Calu3 (cell line): ENCODE measurements at regions of chr9 and their contacts with region 1.

Region 1: DNA sequence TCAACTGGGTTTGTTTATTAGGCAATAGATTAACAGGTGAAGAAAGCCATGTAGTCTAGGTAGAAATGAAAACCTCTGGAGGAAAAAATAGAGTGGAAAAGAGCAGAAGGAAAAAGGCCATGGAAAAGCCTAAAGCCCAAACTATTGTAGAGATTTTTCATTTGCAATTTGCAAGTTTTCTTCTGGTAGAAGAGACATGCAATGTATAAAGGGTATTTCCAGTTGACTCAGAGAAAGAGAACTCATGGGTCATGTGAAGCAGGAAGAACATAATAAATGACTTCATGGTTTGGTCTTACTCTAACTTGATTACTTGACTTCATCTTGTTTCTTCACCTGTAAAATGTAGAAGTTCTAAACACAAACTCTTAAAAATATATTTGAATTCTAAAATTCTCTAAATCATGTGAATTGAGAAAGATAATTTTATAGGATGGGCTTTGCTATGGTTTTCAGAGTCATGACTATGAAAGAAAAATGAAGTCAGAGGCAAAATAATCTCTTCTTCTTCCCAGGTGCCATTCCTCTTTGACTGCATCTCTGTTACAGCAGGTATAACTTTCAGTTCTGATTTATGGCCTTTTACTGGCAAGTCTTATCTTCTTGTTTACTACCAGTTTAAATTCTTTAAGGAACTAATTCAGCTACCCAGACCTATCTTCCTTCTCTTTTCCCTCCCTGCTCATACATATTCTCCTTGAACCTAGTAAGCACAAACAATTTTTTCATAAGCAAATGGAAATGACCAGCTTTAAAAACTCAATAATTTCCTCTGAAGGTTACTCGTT is 47.7 kb upstream of the TMC1 start:
- DNase-seq: no peak
- H3K4me3 Mint-ChIP-seq: no peak overlapping the region
- H3K27ac Mint-ChIP-seq: peak overlapping the region; percentile 80
- H3K4me1 Mint-ChIP-seq: peaks cover 26% of the 10 kb centered on the region
- H3K27me3 Mint-ChIP-seq: no peaks in the 10 kb centered on the region
- CTCF ChIP-seq: no peak

Region 2: GRCh38 chr9:72292256-72292682 is 181.4 kb before region 1 on chr9:
- CTCF ChIA-PET with region 1: no interaction called
- intact Hi-C with region 1: loop called (anchors 10 kb)
- DNase-seq: peak; percentile 12
- H3K4me3 Mint-ChIP-seq: peak overlapping the region; percentile 50
- H3K27ac Mint-ChIP-seq: peak overlapping the region; percentile 97
- H3K4me1 Mint-ChIP-seq: peaks cover 33% of the 10 kb centered on the region
- H3K27me3 Mint-ChIP-seq: no peaks in the 10 kb centered on the region
- CTCF ChIP-seq: no peak

Region 3: DNA sequence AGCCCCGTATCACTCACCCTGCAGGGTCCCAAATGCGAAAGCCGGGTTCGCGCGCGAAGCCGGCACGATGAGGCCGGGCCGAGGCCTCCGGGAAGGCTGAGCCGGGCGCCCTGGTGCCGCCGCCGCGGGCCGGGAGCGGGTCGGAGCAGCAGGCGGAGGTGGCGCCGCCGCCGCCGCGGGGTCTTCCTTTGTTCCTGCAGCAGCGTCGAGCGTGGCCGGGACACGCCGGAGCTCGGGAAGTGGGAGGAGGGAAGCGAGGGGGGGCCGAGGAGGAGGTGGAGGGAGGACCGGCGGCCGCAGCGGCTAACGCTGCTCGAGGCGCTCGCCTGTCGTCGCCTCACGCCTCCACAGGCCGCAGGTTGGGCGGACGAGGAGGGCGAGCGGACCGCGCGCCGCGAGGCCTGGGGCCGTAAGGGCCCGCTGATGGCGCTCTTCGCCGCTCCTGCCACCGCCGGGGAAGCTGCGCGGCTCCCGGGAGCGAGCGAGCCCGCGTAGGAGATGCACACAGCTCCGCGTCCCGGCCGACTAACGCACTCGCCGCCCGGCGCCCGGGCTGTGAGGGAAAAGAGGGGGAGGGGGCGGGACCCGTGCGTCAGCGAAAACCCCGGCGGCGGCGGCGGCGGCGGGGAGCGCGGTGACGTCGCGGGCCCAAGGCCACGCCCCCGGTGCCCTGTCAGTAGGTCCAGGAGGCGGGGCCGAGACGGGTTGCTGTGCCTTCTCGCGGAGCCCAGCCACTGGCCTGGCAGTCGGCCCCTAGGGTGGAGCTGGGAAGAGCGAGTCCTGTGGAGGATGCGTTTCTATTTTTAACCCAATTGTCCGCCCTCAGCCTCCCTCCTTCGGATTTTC is 108.8 kb before region 1 on chr9 and contains the start of gene ZFAND5:
- CTCF ChIA-PET with region 1: no interaction called
- intact Hi-C with region 1: loop called (anchors 5 kb)
- DNase-seq: peak; percentile 94
- H3K4me3 Mint-ChIP-seq: peak within 1 kb of the TSS; percentile 94
- H3K27ac Mint-ChIP-seq: peak within 1 kb of the TSS; percentile 99
- H3K4me1 Mint-ChIP-seq: no peaks in the 10 kb centered on the region
- H3K27me3 Mint-ChIP-seq: no peaks in the 10 kb centered on the region
- CTCF ChIP-seq: no peak
- total RNA-seq, gene ZFAND5: 113 and 115 TPM in 2 replicates

Region 4: GRCh38 chr9:72401396-72401795 is 72.3 kb before region 1 on chr9:
- CTCF ChIA-PET with region 1: no interaction called
- intact Hi-C with region 1: loop called (anchors 10 kb)
- DNase-seq: no peak
- H3K4me3 Mint-ChIP-seq: no peak overlapping the region
- H3K27ac Mint-ChIP-seq: no peak overlapping the region
- H3K4me1 Mint-ChIP-seq: peaks cover 1% of the 10 kb centered on the region
- H3K27me3 Mint-ChIP-seq: no peaks in the 10 kb centered on the region
- CTCF ChIP-seq: no peak

Region 5: GRCh38 chr9:72443855-72444254 is 29.8 kb before region 1 on chr9:
- CTCF ChIA-PET with region 1: no interaction called
- intact Hi-C with region 1: loop called (anchors 5 kb)
- DNase-seq: no peak
- H3K4me3 Mint-ChIP-seq: no peak overlapping the region
- H3K27ac Mint-ChIP-seq: peak overlapping the region; percentile 30
- H3K4me1 Mint-ChIP-seq: peaks cover 29% of the 10 kb centered on the region
- H3K27me3 Mint-ChIP-seq: no peaks in the 10 kb centered on the region
- CTCF ChIP-seq: no peak

Region 6: DNA sequence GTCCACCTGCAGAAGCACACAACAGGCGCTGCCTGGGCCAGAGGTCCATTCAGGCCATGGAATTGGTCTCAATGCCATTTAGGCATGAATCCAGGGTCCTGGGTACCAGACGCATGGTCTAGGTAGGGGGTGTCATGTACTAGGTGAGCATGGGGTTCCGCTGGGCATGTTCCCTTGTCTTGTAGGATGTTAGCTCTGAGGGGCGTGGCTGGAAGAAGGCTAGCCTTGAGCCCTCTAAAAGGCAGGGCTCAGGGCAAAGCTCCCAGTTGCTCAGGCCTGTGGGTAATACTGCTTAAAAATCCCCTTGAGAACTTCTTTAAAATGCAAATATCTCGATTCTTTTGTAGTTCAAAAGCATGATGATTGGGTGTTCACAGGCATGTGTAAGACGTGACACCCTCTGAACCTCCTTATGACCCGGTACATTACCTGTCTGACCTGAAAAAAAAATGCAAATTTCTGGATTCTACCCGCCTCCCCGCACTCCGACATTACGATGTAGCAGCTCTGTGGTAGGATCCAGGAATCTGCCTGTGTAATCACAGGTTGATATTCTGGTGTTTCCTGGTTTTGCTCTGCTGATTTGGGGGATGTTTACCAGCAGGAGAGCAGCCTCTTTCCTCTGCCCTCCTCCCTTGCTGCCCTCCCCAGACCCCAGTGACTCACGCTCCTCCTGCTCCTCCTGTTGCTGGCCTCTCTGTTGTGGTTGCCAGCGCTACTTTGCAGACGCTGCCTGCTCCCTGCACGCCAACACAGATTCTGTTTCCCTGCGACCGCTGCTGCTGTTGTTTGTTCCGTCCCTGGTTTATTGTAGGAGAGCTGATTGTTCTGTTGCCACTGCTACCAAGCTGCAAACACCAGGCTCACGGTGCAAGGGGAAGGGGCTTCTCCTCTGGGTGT is 53.5 kb after region 1 on chr9:
- CTCF ChIA-PET with region 1: interaction called, 4 read pairs
- intact Hi-C with region 1: loop called (anchors 5 kb)
- DNase-seq: peak; percentile 77
- H3K4me3 Mint-ChIP-seq: peak overlapping the region; percentile 49
- H3K27ac Mint-ChIP-seq: peak overlapping the region; percentile 70
- H3K4me1 Mint-ChIP-seq: peaks cover 27% of the 10 kb centered on the region
- H3K27me3 Mint-ChIP-seq: no peaks in the 10 kb centered on the region
- CTCF ChIP-seq: no peak

Region 7: GRCh38 chr9:72586388-72587130 is 112.9 kb after region 1 on chr9:
- CTCF ChIA-PET with region 1: no interaction called
- intact Hi-C with region 1: loop called (anchors 10 kb)
- DNase-seq: peak; percentile 32
- H3K4me3 Mint-ChIP-seq: no peak overlapping the region
- H3K27ac Mint-ChIP-seq: no peak overlapping the region
- H3K4me1 Mint-ChIP-seq: peaks cover 29% of the 10 kb centered on the region
- H3K27me3 Mint-ChIP-seq: no peaks in the 10 kb centered on the region
- CTCF ChIP-seq: no peak